Activated CD4-positive, alpha-beta T cell treated with anti-CD3 and anti-CD28 coated beads, Interleukin-2, amount 10 ng/mL, durations not matched to agents 24 days and 14 days (primary cell): ENCODE measurements at regions of chr17 and their contacts with region 1.

Region 1: DNA sequence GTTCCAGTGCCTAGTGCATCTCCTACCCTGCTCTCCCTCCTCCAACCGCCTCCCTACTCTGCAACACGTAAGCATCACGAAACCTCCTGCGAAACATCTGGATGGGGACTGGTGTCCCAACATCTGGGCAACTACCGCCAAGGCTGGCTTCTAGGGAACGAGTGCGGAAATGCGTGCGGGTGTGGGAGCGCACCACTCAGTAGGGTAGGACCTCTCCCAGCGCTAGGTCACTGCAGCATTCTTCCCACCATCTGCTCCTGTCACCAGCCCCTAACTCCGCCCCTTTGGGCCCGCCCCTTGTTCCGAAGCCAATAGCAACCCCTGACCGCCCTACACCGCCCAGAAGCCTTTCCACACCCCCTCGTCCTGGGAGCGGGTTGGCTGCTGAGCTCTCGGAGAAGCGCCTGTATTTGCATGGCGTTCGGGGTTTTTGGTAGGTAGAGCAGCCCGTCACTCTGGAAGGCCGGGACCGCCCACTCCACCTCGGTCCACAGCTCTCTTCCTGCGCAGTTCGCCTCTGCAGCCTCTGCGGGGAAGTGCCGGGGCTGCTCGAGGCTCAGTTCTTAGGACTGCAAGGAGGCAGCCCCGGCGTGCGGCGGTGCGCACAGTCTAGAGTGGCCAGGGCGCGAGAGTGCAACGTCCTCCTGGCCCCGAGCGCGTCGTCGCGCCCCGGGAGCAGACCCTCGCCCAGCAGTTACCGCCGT is at the start of gene HS3ST3B1:
- DNase-seq: peak; percentile 100
- H3K4me3 Mint-ChIP-seq: peak within 1 kb of the TSS; percentile 91
- H3K27ac Mint-ChIP-seq: peak within 1 kb of the TSS; percentile 97
- H3K4me1 Mint-ChIP-seq: peaks cover 56% of the 10 kb centered on the region
- H3K27me3 Mint-ChIP-seq: peaks cover 23% of the 10 kb centered on the region
- total RNA-seq, gene HS3ST3B1: 19.6 and 20.8 TPM in 2 replicates

Region 2: DNA sequence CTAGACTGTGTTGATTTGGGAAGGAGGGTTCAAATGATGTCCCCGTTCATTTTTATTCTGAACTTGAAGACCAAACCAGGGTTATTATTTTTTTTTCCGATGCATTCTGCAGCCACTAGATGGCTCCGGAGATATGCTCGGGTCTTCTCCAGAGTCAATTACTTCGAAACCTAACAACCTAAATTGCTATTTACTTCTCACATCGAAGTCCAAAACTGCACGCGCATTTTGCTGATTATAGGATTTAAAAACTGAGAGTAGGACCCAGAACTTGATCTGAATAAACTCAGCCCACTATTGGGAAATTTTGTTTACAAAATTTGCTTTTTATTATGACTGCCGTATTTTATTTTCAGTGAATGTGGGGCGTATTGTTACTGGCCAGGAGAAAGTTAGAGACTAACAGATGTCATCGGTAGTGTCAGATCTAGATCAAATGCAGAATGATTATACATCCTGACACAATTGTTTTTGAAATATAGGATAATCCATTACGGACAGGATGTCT is 962.8 kb before region 1 on chr17:
- intact Hi-C with region 1: loop called (anchors 5 kb)
- DNase-seq: peak; percentile 73
- H3K4me3 Mint-ChIP-seq: peak overlapping the region; percentile 50
- H3K27ac Mint-ChIP-seq: no peak overlapping the region
- H3K4me1 Mint-ChIP-seq: peaks cover 4% of the 10 kb centered on the region
- H3K27me3 Mint-ChIP-seq: peaks cover 11% of the 10 kb centered on the region

Region 3: GRCh38 chr17:13609936-13610335 is 690.8 kb before region 1 on chr17:
- intact Hi-C with region 1: no loop called
- DNase-seq: no peak
- H3K4me3 Mint-ChIP-seq: no peak overlapping the region
- H3K27ac Mint-ChIP-seq: no peak overlapping the region
- H3K4me1 Mint-ChIP-seq: no peaks in the 10 kb centered on the region
- H3K27me3 Mint-ChIP-seq: peaks cover 22% of the 10 kb centered on the region

Region 4: DNA sequence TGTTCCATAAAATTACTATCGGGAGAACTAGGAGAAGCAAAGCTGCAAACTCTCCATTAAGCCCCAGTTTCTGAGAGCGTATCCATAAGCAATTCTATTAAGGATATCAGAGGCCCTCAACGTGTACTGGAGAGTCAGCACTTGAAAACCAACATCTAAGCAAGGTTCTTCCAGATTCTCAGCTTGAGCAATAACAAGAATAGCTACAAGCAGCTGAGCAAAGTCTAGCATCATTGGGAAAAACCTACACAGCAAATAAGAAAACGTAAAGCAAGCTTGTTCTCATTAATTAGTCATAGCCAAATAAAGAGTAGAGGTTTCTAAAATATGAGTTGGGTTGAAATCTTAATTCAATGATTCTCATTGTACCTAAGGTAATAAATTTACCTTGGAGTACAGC is 258.3 kb before region 1 on chr17:
- intact Hi-C with region 1: loop called (anchors 2 kb)
- DNase-seq: no peak
- H3K4me3 Mint-ChIP-seq: no peak overlapping the region
- H3K27ac Mint-ChIP-seq: peak overlapping the region; percentile 59
- H3K4me1 Mint-ChIP-seq: peaks cover 51% of the 10 kb centered on the region
- H3K27me3 Mint-ChIP-seq: no peaks in the 10 kb centered on the region

Region 5: GRCh38 chr17:14118951-14119350 is 181.8 kb before region 1 on chr17:
- intact Hi-C with region 1: loop called (anchors 1 kb)
- DNase-seq: peak; percentile 82
- H3K4me3 Mint-ChIP-seq: peak overlapping the region; percentile 40
- H3K27ac Mint-ChIP-seq: peak overlapping the region; percentile 92
- H3K4me1 Mint-ChIP-seq: peaks cover 82% of the 10 kb centered on the region
- H3K27me3 Mint-ChIP-seq: no peaks in the 10 kb centered on the region

Region 6: GRCh38 chr17:14396547-14396946 is 95.8 kb after region 1 on chr17:
- intact Hi-C with region 1: loop called (anchors 5 kb)
- DNase-seq: no peak
- H3K4me3 Mint-ChIP-seq: no peak overlapping the region
- H3K27ac Mint-ChIP-seq: no peak overlapping the region
- H3K4me1 Mint-ChIP-seq: peaks cover 2% of the 10 kb centered on the region
- H3K27me3 Mint-ChIP-seq: peaks cover 3% of the 10 kb centered on the region

Region 7: DNA sequence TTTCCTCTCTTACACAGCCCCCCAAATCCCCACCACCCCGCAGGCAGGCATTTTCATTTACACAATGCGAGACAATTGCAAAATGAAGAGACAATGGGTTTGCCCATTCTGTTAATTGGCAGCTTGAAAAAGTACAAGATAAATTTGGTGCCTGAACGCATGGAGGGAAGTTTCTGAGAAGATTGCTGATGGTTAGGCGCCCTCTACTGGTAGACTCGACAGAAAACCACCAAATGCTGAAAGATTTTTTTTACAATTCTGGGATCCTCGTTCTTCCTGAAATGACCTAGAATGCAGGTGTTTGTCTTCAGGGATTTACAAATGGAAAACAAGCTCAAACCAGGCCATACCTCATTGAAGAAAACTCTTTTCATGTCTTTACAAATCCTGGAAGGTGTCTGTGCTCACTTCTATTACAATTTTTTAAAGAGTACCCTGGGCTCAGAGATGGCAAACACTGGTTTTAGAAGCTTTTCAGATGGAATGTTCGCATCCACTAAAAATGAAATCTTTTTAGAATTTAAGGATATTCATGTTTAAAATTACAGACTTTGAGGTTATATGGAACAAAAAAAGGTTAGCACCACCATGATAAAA is 625.9 kb after region 1 on chr17:
- intact Hi-C with region 1: loop called (anchors 10 kb)
- DNase-seq: peak; percentile 85
- H3K4me3 Mint-ChIP-seq: no peak overlapping the region
- H3K27ac Mint-ChIP-seq: no peak overlapping the region
- H3K4me1 Mint-ChIP-seq: no peaks in the 10 kb centered on the region
- H3K27me3 Mint-ChIP-seq: peaks cover 2% of the 10 kb centered on the region